ENCODE measurements at regions of chr16 and their contacts with region 1.

Region 1: GRCh38 chr16:23149349-23149996 is at the start of gene USP31:
- DNase-seq: peak; percentile 93
- ATAC-seq: peak; percentile 84
- H3K4me3 ChIP-seq: peak within 1 kb of the TSS; percentile 65 to 79 (median 68)
- H3K27ac ChIP-seq: peak within 1 kb of the TSS; percentile 85 to 92 (median 90)
- H3K4me1 ChIP-seq: peaks cover 33 to 35% of the 10 kb centered on the region in 2 donors
- H3K27me3 ChIP-seq: no peaks in the 10 kb centered on the region
- CTCF ChIP-seq: no peak
- POLR2A ChIP-seq: peak; percentile 77 to 79
- total RNA-seq, gene USP31: 13.2 to 23.3 (median 18.7) TPM

Region 2: GRCh38 chr16:23131931-23132621 is 17.4 kb before region 1 on chr16:
- in situ Hi-C with region 1: no loop called
- intact Hi-C with region 1: loop called (anchors 2 kb)
- DNase-seq: no peak
- ATAC-seq: peak; percentile 8 to 38
- H3K4me3 ChIP-seq: peak overlapping the region in 3 of 4 donors; percentile 14 to 46 (median 25)
- H3K27ac ChIP-seq: peak overlapping the region; percentile 63 to 78 (median 76)
- H3K4me1 ChIP-seq: peaks cover 34 to 47% of the 10 kb centered on the region in 2 donors
- H3K27me3 ChIP-seq: no peaks in the 10 kb centered on the region
- CTCF ChIP-seq: no peak
- POLR2A ChIP-seq: peak; percentile 7 to 32